ENCODE measurements at regions of chr13 and their contacts with region 1.

Region 1: DNA sequence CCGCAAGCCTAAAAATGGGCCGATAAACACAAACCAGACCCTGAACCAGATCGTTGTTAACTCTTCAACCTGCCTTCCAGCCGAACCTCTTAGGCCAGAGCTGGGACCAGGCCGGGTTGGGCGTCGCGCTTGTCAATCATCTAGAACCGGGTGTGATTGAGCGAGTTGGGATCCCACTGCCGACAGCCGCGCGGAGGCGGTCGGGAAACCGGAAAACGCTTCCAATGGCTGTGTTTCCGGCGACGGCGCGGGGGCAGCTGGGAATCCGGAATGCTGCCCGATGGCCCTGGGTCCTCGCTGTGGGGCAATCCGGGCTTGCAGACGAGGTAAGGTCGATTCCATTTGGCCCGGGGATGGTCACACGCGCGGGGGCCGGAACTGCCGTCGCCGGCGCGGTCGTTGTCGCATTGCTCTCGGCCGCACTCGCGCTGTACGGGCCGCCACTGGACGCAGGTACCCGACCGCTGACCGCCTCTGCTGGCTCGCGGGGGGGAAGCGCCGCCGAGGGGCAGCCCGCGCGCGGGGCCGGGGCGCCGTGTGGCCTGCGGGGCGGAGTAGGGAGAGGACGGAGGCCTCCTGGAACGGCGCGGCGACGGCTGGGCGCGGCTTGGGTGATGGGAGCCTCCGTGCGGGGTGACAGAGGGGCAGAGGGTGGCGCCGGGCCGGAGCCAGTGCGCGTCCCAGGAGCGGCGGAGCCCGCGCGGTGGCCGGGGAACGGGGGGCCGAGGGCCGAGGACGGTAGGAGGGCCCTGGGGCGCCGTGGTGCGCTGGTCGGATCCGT is at the start of gene NAXD:
- DNase-seq: peak; percentile 97 to 98
- H3K4me3 ChIP-seq: peak within 1 kb of the TSS; percentile 96
- H3K4me3 Mint-ChIP-seq: peak within 1 kb of the TSS; percentile 88
- H3K27ac Mint-ChIP-seq: peak within 1 kb of the TSS; percentile 96
- H3K4me1 ChIP-seq: peaks cover 33% of the 10 kb centered on the region
- H3K4me1 Mint-ChIP-seq: peaks cover 5% of the 10 kb centered on the region
- H3K27me3 ChIP-seq: no peaks in the 10 kb centered on the region
- H3K27me3 Mint-ChIP-seq: no peaks in the 10 kb centered on the region
- CTCF ChIP-seq: no peak
- total RNA-seq, gene NAXD: 48.8 and 51.5 TPM in 2 replicates

Region 2: DNA sequence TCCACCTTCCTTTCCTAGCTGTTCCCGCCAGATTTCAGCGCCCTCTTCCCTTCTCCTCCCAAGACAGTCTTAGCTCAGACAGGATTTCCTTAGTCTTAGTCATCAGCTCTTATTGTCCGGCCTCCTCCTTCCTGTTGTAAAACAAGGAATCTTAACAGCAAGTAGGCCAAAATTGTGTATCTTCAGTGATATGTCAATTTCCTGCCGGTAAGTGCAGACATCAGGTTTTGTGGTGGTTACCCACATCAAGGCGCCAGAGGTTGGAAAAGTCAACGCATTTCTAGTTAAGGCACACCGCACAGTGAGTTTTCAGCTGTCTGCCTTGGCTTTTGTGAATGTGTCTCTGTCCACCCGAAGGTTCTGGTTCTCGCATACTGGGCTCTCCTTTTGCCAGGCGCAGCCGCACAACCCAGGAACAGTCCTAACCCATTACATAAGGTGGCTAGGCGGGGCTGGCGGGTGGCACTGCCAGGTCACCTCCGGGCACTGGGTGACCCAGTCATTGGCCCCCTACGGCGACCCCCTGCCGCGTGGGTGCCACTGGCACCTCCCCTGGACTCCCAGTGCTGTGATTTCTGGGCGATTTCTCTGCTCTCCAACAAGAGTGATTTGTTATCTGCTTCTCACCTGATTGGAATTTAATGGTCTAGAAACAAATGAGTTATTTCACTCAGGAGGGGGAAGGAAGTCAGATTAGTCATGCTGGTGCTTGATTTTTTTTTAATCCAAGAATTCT is 295.6 kb before region 1 on chr13:
- CTCF ChIA-PET with region 1: no interaction called
- POLR2A ChIA-PET with region 1: no interaction called
- intact Hi-C with region 1: no loop called
- DNase-seq: no peak
- H3K4me3 ChIP-seq: no peak overlapping the region
- H3K4me3 Mint-ChIP-seq: no peak overlapping the region
- H3K27ac Mint-ChIP-seq: no peak overlapping the region
- H3K4me1 ChIP-seq: peaks cover 22% of the 10 kb centered on the region
- H3K4me1 Mint-ChIP-seq: peaks cover 29% of the 10 kb centered on the region
- H3K27me3 ChIP-seq: no peaks in the 10 kb centered on the region
- H3K27me3 Mint-ChIP-seq: no peaks in the 10 kb centered on the region
- CTCF ChIP-seq: no peak

Region 3: GRCh38 chr13:110593430-110594130 is 21.9 kb before region 1 on chr13:
- CTCF ChIA-PET with region 1: interaction called, 3 read pairs
- POLR2A ChIA-PET with region 1: no interaction called
- intact Hi-C with region 1: loop called (anchors 1 kb)
- DNase-seq: peak in 1 of 2 experiments; percentile 67
- H3K4me3 ChIP-seq: no peak overlapping the region
- H3K4me3 Mint-ChIP-seq: no peak overlapping the region
- H3K27ac Mint-ChIP-seq: no peak overlapping the region
- H3K4me1 ChIP-seq: peaks cover 12% of the 10 kb centered on the region
- H3K4me1 Mint-ChIP-seq: peaks cover 23% of the 10 kb centered on the region
- H3K27me3 ChIP-seq: no peaks in the 10 kb centered on the region
- H3K27me3 Mint-ChIP-seq: no peaks in the 10 kb centered on the region
- CTCF ChIP-seq: peak; percentile 63 to 64

Region 4: DNA sequence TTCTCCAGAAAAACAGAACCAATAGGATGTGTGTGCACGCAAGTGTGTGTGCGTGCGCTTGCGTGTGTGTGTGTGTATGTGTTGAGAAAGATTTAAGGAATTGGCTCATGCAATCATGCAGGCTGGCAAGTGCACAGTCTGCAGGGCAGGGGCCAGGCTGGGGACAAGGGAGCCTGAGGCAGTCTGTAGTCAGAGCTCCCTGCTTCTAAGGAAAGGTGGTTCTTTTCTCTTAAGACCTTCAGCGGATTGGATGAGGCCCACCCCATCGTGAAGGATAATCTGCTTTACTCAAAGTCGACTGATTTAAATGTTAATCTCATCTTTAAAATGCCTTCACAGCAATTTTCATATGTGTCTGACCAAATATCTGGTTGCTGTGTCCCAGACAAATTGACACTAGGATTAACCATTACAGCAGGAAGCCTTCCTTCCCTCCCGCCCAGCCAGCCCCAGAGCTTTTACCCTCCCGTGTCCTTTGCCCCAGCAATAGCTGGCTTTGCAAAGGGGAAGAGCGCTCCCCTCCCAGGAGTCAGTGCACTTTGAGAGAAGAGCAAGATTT is 15.2 kb before region 1 on chr13:
- CTCF ChIA-PET with region 1: interaction called, 4 read pairs
- POLR2A ChIA-PET with region 1: no interaction called
- intact Hi-C with region 1: loop called (anchors 2 kb)
- DNase-seq: peak; percentile 76 to 79
- H3K4me3 ChIP-seq: no peak overlapping the region
- H3K4me3 Mint-ChIP-seq: peak overlapping the region; percentile 61
- H3K27ac Mint-ChIP-seq: peak overlapping the region; percentile 52
- H3K4me1 ChIP-seq: peaks cover 40% of the 10 kb centered on the region
- H3K4me1 Mint-ChIP-seq: peaks cover 36% of the 10 kb centered on the region
- H3K27me3 ChIP-seq: no peaks in the 10 kb centered on the region
- H3K27me3 Mint-ChIP-seq: no peaks in the 10 kb centered on the region
- CTCF ChIP-seq: no peak

Region 5: GRCh38 chr13:110676595-110677587 is 61.4 kb after region 1 on chr13:
- CTCF ChIA-PET with region 1: no interaction called
- POLR2A ChIA-PET with region 1: no interaction called
- intact Hi-C with region 1: no loop called
- DNase-seq: no peak
- H3K4me3 ChIP-seq: no peak overlapping the region
- H3K4me3 Mint-ChIP-seq: no peak overlapping the region
- H3K27ac Mint-ChIP-seq: no peak overlapping the region
- H3K4me1 ChIP-seq: no peaks in the 10 kb centered on the region
- H3K4me1 Mint-ChIP-seq: no peaks in the 10 kb centered on the region
- H3K27me3 ChIP-seq: no peaks in the 10 kb centered on the region
- H3K27me3 Mint-ChIP-seq: no peaks in the 10 kb centered on the region
- CTCF ChIP-seq: no peak

Measured in Caco-2 (cell line).